Activated CD8-positive, alpha-beta T cell treated with anti-CD3 and anti-CD28 coated beads for 36 hours (primary cell): ENCODE measurements at regions of chrX and their contacts with region 1.

Region 1: GRCh38 chrX:40175511-40176350 is 78.0 kb upstream of the BCOR start:
- DNase-seq: peak; percentile 80
- ATAC-seq: peak; percentile 29
- H3K4me3 Mint-ChIP-seq: peak overlapping the region; percentile 83
- H3K27ac Mint-ChIP-seq: peak overlapping the region; percentile 97
- H3K4me1 Mint-ChIP-seq: peaks cover 22% of the 10 kb centered on the region
- H3K27me3 Mint-ChIP-seq: no peaks in the 10 kb centered on the region
- CTCF ChIP-seq: no peak

Region 2: DNA sequence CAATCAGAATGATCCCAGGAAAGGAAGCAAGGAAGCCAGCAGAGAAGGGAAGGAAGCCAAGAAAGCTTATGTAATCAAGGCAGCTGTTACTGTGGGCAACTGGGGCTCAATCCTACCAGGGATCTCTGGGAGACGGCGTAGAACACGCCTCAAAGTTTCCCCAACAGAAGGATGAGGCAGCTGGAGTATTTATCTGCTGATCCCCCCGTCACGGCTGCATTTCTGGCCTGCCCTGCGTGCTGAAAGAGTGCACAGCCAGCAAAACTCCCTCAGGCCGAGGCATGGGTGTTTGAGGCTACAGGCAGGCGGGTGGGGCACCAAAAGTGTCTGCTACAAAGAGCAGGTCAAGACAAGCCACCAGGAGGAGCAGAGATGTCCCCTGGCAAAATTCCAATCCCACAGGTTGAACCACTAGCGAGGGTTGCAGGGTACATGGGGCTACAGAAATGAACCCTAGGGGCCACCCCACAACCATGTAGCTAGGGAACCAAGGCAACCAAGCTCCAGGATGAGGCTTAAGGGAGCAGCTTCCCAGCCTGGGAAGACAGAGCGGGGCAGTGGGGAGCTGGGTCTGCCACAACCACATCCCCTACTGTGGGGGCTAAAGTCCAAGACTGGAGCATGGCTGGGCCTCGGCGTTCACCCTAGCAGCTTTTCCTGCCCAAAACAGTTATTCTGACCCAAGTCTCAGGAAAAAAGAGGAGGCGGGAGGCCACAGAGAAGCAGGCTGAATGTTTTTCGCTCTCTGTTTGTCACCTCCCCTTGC is 191.4 kb before region 1 on chrX:
- CTCF ChIA-PET with region 1: no interaction called
- POLR2A ChIA-PET with region 1: no interaction called
- intact Hi-C with region 1: no loop called
- DNase-seq: no peak
- ATAC-seq: no peak
- H3K4me3 Mint-ChIP-seq: no peak overlapping the region
- H3K27ac Mint-ChIP-seq: no peak overlapping the region
- H3K4me1 Mint-ChIP-seq: peaks cover 6% of the 10 kb centered on the region
- H3K27me3 Mint-ChIP-seq: no peaks in the 10 kb centered on the region
- CTCF ChIP-seq: no peak

Region 3: DNA sequence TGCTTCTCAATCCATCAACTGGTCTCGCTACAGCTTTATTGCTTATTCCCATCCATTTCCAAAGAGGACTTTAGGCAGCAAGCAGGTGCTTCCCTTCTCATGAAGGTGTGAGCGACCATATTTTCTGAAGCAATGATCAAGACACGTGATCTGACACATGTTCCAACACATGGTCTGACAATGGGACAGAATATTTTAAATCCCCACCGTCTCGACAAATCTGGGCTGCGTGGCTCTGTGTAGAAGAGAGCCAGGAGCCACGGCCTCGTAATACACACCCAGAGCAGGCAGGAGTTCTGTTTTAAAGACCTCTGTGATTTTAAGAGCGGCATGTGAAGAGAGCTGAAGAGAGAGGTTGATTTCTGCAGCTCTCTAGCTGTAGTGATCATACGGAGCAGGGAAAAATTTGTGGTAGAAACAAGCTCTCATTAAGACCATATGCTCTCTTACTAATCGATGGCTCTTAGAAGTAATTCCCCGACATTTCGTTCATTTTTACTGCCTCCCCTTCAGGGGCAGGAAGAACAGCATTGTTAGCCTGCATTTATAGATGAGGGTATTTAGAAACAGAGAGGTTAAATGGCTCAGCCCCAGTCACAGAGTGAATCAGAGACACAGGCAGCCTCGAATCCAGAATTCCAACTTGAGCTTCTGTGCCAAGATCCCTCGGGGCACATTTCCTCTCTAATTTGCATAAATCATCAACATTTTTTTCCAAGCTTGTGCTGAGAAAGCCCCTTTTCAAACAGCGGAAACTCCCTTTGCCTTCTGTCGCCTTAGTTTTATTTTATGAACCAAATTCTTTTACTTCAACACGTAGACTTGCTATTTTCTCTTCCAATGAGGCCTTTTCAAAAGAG is 13.1 kb after region 1 on chrX:
- CTCF ChIA-PET with region 1: no interaction called
- POLR2A ChIA-PET with region 1: interaction called, 13 read pairs
- intact Hi-C with region 1: no loop called
- DNase-seq: no peak
- ATAC-seq: no peak
- H3K4me3 Mint-ChIP-seq: no peak overlapping the region
- H3K27ac Mint-ChIP-seq: peak overlapping the region; percentile 62
- H3K4me1 Mint-ChIP-seq: peaks cover 14% of the 10 kb centered on the region
- H3K27me3 Mint-ChIP-seq: no peaks in the 10 kb centered on the region
- CTCF ChIP-seq: no peak